ENCODE measurements at regions of chr14 and their contacts with region 1.

Region 1: GRCh38 chr14:90235179-90235976 is 21.0 kb upstream of the PSMC1 start:
- DNase-seq: peak; percentile 69
- H3K4me3 Mint-ChIP-seq: no peak overlapping the region
- H3K27ac Mint-ChIP-seq: no peak overlapping the region
- H3K4me1 Mint-ChIP-seq: no peaks in the 10 kb centered on the region
- H3K27me3 Mint-ChIP-seq: no peaks in the 10 kb centered on the region
- CTCF ChIP-seq: peak; percentile 95

Region 2: GRCh38 chr14:89936658-89937185 is 298.7 kb before region 1 on chr14:
- CTCF ChIA-PET with region 1: interaction called, 7 read pairs
- POLR2A ChIA-PET with region 1: no interaction called
- intact Hi-C with region 1: loop called (anchors 1 kb)
- DNase-seq: no peak
- H3K4me3 Mint-ChIP-seq: no peak overlapping the region
- H3K27ac Mint-ChIP-seq: no peak overlapping the region
- H3K4me1 Mint-ChIP-seq: no peaks in the 10 kb centered on the region
- H3K27me3 Mint-ChIP-seq: no peaks in the 10 kb centered on the region
- CTCF ChIP-seq: no peak

Region 3: GRCh38 chr14:89954070-89955028 is 281.0 kb before region 1 on chr14 and contains the start of gene EFCAB11:
- CTCF ChIA-PET with region 1: interaction called, 6 read pairs
- POLR2A ChIA-PET with region 1: no interaction called
- intact Hi-C with region 1: loop called (anchors 1 kb)
- DNase-seq: peak; percentile 99
- H3K4me3 Mint-ChIP-seq: peak within 1 kb of the TSS; percentile 88
- H3K27ac Mint-ChIP-seq: peak within 1 kb of the TSS; percentile 65
- H3K4me1 Mint-ChIP-seq: peaks cover 19% of the 10 kb centered on the region
- H3K27me3 Mint-ChIP-seq: no peaks in the 10 kb centered on the region
- CTCF ChIP-seq: peak; percentile 30
- total RNA-seq, gene EFCAB11: 10.6 and 11.1 TPM in 2 replicates

Region 4: GRCh38 chr14:89959853-89960445 is 275.4 kb before region 1 on chr14:
- CTCF ChIA-PET with region 1: interaction called, 43 read pairs
- POLR2A ChIA-PET with region 1: no interaction called
- intact Hi-C with region 1: loop called (anchors 1 kb)
- DNase-seq: no peak
- H3K4me3 Mint-ChIP-seq: no peak overlapping the region
- H3K27ac Mint-ChIP-seq: no peak overlapping the region
- H3K4me1 Mint-ChIP-seq: peaks cover 18% of the 10 kb centered on the region
- H3K27me3 Mint-ChIP-seq: no peaks in the 10 kb centered on the region
- CTCF ChIP-seq: no peak

Region 5: DNA sequence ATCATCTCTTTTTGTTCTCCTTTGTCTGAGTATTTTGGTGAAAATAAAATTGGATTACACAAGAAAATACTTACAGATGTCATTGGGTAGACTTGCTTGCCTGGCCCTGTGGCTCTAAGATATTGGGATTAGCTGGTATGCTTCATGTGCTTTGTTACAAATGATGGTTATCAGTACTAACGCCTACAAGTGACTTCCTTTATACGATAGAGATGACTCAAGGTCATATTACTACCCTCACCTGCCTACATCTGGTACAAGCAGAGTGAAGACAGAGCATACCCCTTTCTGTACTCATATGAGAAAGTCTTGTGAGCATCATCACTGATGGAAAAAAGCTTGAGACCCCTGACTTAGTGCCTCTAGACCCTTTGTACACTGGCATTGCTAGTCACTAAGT is 231.5 kb before region 1 on chr14:
- CTCF ChIA-PET with region 1: interaction called, 19 read pairs
- POLR2A ChIA-PET with region 1: no interaction called
- intact Hi-C with region 1: no loop called
- DNase-seq: no peak
- H3K4me3 Mint-ChIP-seq: no peak overlapping the region
- H3K27ac Mint-ChIP-seq: no peak overlapping the region
- H3K4me1 Mint-ChIP-seq: no peaks in the 10 kb centered on the region
- H3K27me3 Mint-ChIP-seq: no peaks in the 10 kb centered on the region
- CTCF ChIP-seq: no peak

Region 6: GRCh38 chr14:90109646-90110257 is 125.6 kb before region 1 on chr14:
- CTCF ChIA-PET with region 1: interaction called, 3 read pairs
- POLR2A ChIA-PET with region 1: no interaction called
- intact Hi-C with region 1: loop called (anchors 10 kb)
- DNase-seq: peak; percentile 49
- H3K4me3 Mint-ChIP-seq: no peak overlapping the region
- H3K27ac Mint-ChIP-seq: no peak overlapping the region
- H3K4me1 Mint-ChIP-seq: peaks cover 8% of the 10 kb centered on the region
- H3K27me3 Mint-ChIP-seq: peaks cover 26% of the 10 kb centered on the region
- CTCF ChIP-seq: no peak

Region 7: GRCh38 chr14:90256354-90257131 is 21.2 kb after region 1 on chr14 and contains the start of gene PSMC1:
- CTCF ChIA-PET with region 1: interaction called, 11 read pairs
- POLR2A ChIA-PET with region 1: no interaction called
- intact Hi-C with region 1: no loop called
- DNase-seq: peak; percentile 91
- H3K4me3 Mint-ChIP-seq: peak within 1 kb of the TSS; percentile 97
- H3K27ac Mint-ChIP-seq: peak within 1 kb of the TSS; percentile 100
- H3K4me1 Mint-ChIP-seq: peaks cover 16% of the 10 kb centered on the region
- H3K27me3 Mint-ChIP-seq: no peaks in the 10 kb centered on the region
- CTCF ChIP-seq: no peak
- total RNA-seq, gene PSMC1: 107 and 125 TPM in 2 replicates